ENCODE measurements at regions of chr4 and their contacts with region 1.

Region 1: GRCh38 chr4:121842862-121843261 is 19.2 kb upstream of the CCNA2 start:
- DNase-seq: no peak
- H3K4me3 ChIP-seq: no peak overlapping the region
- H3K27ac ChIP-seq: no peak overlapping the region
- H3K4me1 ChIP-seq: no peaks in the 10 kb centered on the region
- H3K27me3 ChIP-seq: no peaks in the 10 kb centered on the region
- CTCF ChIP-seq: no peak
- EP300 ChIP-seq: no peak
- POLR2A ChIP-seq: no peak

Region 2: DNA sequence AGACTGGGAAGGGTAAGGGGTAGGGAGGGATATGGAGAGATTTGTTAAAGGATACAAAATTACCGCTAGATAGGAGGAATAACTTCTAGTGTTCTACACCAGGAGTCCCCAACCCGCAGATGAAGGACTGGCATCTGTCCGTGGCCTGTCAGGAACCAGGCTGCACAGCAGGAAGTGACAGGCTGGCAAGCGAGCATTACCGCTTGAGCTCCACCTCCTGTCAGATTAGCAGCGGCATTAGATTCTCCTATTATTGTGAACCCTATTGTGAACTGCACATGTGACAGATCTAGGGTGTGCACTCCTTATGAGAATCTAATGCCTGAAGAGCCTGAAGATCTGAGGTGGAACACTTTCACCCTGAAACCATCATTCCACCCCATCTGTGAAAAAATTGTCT is 55.3 kb after region 1 on chr4:
- in situ Hi-C with region 1: no loop called
- intact Hi-C with region 1: loop called (anchors 2 kb)
- DNase-seq: peak; percentile 12
- H3K4me3 ChIP-seq: no peak overlapping the region
- H3K27ac ChIP-seq: no peak overlapping the region
- H3K4me1 ChIP-seq: no peaks in the 10 kb centered on the region
- H3K27me3 ChIP-seq: no peaks in the 10 kb centered on the region
- CTCF ChIP-seq: no peak
- EP300 ChIP-seq: no peak
- POLR2A ChIP-seq: no peak

Measured in transverse colon (tissue), 4 donors.